PC-3 (cell line): ENCODE measurements at regions of chr4 and their contacts with region 1.

Region 1: DNA sequence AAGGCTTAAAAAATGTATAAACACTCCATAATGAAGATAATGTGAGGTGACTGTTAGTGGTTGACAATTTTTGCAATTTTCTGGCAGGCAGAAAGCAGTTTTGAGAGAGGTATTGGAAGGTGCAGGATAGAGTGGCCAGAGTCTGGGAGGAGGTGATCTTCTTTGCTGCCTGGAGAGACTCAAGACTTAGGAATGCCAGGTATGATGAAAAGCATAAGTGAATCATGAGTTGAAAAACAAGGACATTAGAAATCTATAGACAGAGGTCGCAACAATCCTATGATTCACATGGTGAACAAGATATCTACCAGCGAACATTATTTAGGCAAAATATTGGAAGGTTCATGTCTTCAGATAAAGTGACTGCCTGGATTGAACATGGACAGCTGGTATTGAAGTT is 118.5 kb downstream of the CFAP299 start:
- DNase-seq: peak; percentile 88
- ATAC-seq: peak; percentile 84
- H3K4me3 ChIP-seq: peak overlapping the region; percentile 42
- H3K27ac ChIP-seq: peak overlapping the region; percentile 90
- H3K4me1 ChIP-seq: peaks cover 51% of the 10 kb centered on the region
- H3K27me3 ChIP-seq: no peaks in the 10 kb centered on the region
- CTCF ChIP-seq: no peak

Region 2: DNA sequence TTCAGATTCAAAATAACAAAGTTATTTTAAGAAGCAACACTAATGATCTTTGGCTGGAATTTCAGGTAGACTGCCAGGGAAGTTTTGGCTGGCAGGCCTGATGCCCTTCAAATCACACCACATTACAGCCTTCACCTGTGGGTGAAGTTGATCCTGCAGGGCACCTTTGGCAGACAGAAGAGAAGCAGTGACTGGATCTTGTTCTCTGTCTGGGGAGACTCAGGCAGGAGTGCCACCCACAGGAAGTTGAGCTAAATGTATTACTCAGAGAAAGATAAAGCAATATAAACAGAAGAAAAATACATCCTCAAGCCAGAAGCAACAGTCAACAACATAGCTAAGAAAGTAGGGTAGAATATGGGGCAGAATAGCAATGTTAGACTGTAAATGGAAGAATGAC is 131.3 kb before region 1 on chr4:
- CTCF ChIA-PET with region 1: no interaction called
- POLR2A ChIA-PET with region 1: no interaction called
- intact Hi-C with region 1: no loop called
- DNase-seq: peak; percentile 68
- ATAC-seq: peak; percentile 99
- H3K4me3 ChIP-seq: no peak overlapping the region
- H3K27ac ChIP-seq: no peak overlapping the region
- H3K4me1 ChIP-seq: peaks cover 13% of the 10 kb centered on the region
- H3K27me3 ChIP-seq: no peaks in the 10 kb centered on the region
- CTCF ChIP-seq: peak; percentile 63

Region 3: GRCh38 chr4:80538276-80538926 is 84.4 kb after region 1 on chr4:
- CTCF ChIA-PET with region 1: no interaction called
- POLR2A ChIA-PET with region 1: no interaction called
- intact Hi-C with region 1: loop called (anchors 5 kb)
- DNase-seq: peak; percentile 79
- ATAC-seq: peak; percentile 97
- H3K4me3 ChIP-seq: no peak overlapping the region
- H3K27ac ChIP-seq: 0 out of 2 replicates have a peak overlapping the region, but pooled peaks have one; percentile 21
- H3K4me1 ChIP-seq: peaks cover 20% of the 10 kb centered on the region
- H3K27me3 ChIP-seq: no peaks in the 10 kb centered on the region
- CTCF ChIP-seq: no peak

Region 4: DNA sequence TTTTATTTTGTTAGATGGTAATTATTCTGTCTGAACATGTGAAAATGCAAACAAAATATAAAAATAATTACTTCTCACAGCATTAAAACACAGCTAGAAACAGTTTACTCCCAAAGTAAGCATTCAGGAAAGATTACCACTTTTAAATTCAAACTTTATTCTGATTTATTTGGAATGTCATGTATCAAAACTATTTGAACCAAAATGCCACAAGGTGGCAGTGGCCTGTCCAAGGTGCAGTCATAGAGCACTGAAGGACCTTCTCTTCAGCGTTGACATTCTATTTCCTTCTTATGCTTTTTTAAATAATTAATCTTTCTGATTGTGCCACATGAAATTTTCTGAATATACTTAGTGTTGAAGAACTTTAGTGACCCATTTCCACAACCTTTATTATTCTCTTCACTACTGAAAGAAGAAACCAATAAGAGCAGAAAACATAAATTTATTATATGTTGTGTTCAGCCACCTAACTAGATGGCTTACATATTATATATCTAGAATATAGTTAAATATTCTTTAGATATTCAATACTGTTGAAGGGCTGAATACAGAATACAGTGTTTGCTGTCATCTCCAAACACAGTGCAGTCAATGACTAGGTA is 165.1 kb after region 1 on chr4:
- CTCF ChIA-PET with region 1: no interaction called
- POLR2A ChIA-PET with region 1: no interaction called
- intact Hi-C with region 1: loop called (anchors 5 kb)
- DNase-seq: peak; percentile 49
- ATAC-seq: 0 out of 2 replicates have a peak, but pooled peaks have one; percentile 48
- H3K4me3 ChIP-seq: no peak overlapping the region
- H3K27ac ChIP-seq: no peak overlapping the region
- H3K4me1 ChIP-seq: peaks cover 2% of the 10 kb centered on the region; the same call in 1 of the 2 replicates
- H3K27me3 ChIP-seq: no peaks in the 10 kb centered on the region
- CTCF ChIP-seq: peak; percentile 67

Region 5: GRCh38 chr4:81021142-81021944 is 567.3 kb after region 1 on chr4:
- CTCF ChIA-PET with region 1: no interaction called
- POLR2A ChIA-PET with region 1: no interaction called
- intact Hi-C with region 1: loop called (anchors 5 kb)
- DNase-seq: peak; percentile 94
- ATAC-seq: peak; percentile 76
- H3K4me3 ChIP-seq: peak overlapping the region; percentile 26; the same call in 1 of the 2 replicates
- H3K27ac ChIP-seq: peak overlapping the region; percentile 96
- H3K4me1 ChIP-seq: peaks cover 44% of the 10 kb centered on the region
- H3K27me3 ChIP-seq: no peaks in the 10 kb centered on the region
- CTCF ChIP-seq: no peak

Region 6: DNA sequence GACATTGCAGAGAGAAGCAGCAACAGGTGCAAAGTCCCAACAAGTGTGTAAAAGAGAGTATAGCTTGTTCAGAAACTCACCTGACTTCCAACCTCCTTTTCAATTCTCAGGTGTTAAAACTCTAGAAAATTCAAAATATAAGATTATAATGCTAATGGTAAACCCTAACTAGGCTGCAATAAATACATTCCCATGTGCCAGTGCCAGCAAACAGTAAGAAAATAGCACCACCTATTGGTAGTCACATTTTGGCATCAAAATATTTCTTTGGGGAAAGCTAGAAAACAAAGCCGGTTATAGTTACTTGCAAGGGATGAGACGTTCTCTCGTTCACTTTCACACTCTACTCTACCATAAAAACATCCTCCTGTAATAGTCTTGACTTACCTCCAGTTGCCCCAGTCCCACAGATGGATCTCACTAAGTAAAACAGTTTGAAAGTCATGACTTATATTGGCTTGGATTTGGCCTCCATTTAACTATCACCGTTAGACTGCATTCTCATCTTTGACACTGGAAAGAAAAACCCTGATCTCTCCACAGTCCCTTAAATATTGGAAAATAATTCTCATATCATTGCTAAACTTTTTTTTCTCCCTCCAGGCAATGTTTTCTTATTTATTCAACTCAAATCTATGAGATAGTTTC is 586.1 kb after region 1 on chr4:
- CTCF ChIA-PET with region 1: no interaction called
- POLR2A ChIA-PET with region 1: no interaction called
- intact Hi-C with region 1: loop called (anchors 5 kb)
- DNase-seq: peak; percentile 75
- ATAC-seq: peak; percentile 61
- H3K4me3 ChIP-seq: no peak overlapping the region
- H3K27ac ChIP-seq: no peak overlapping the region
- H3K4me1 ChIP-seq: peaks cover 14% of the 10 kb centered on the region
- H3K27me3 ChIP-seq: no peaks in the 10 kb centered on the region
- CTCF ChIP-seq: peak; percentile 82